ENCODE measurements at regions of chr11 and their contacts with region 1.

Region 1: DNA sequence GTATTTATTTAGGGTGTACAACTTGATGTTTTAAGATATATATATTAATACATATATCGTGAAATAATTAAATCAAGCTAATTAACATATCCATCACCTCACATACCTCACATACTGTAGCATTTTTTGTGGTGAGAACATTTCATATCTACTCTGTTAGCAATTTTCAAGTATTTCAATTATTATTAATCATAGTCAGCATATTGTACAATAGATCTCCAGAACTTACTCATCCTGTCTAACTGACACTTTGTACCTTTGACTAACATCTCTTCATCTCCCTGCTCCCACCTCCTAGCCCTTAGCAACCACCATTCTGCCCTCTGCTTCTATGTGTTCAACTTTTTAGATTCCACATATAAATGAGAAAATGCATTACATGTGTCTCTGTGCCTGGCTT is 108.4 kb downstream of the BARX2 start:
- DNase-seq: no peak
- ATAC-seq: no peak
- H3K4me3 ChIP-seq: no peak overlapping the region
- H3K27ac ChIP-seq: no peak overlapping the region
- H3K4me1 ChIP-seq: no peaks in the 10 kb centered on the region
- H3K27me3 ChIP-seq: peaks cover 3% of the 10 kb centered on the region; the same call in 1 of the 2 replicates
- CTCF ChIP-seq: no peak

Region 2: GRCh38 chr11:129402206-129402605 is 81.9 kb before region 1 on chr11:
- CTCF ChIA-PET with region 1: no interaction called
- POLR2A ChIA-PET with region 1: interaction called, 15 read pairs
- in situ Hi-C with region 1: no loop called
- intact Hi-C with region 1: no loop called
- DNase-seq: no peak
- ATAC-seq: no peak
- H3K4me3 ChIP-seq: no peak overlapping the region
- H3K27ac ChIP-seq: no peak overlapping the region
- H3K4me1 ChIP-seq: no peaks in the 10 kb centered on the region
- H3K27me3 ChIP-seq: peaks cover 7% of the 10 kb centered on the region
- CTCF ChIP-seq: no peak

Measured in Panc1 (cell line).